B cell (primary cell): ENCODE measurements at regions of chr12 and their contacts with region 1.

Region 1: DNA sequence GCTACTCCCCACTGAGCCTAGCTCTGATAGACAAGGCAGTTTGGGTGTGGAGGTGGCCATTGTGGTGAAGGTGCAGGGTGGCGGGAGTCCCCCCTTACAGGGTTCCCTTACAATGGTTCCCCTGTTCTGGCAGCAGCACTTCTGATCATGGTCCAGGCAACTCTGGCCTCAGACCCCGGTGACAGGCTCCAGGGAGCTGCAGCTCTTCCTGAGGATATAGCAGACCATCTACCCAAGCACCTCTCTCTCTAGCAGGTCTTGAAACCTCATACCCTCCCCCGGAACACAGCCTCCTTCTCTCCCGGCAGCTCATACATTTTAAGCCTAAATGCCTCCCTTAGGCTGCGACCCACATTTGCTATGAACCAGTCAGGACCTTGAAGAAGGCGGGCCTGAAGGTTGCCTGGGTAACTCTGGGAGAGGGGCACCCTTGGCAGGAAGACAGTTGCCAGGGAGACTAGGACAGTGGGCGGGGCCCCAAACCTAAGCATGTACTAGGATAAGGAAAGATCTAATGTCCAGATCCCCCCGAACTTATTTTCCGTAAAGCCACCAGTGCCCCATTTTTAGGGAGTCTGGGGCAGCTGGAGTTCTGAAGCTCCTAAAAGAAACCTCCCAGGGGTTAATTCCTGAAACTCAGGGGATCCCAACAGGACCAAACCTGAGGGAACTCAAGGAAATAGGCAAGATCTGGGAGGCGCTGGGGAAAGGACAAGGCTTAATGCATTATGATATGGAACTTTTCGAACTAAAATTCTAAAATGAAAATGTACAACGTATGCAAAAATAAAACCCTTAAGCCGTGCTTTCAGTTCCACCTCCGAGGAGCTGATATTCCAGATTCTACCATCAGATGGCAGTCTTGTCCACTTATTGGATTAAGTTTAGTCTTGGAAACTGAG is 4.5 kb upstream of the GDF11 start:
- DNase-seq: peak; percentile 89
- ATAC-seq: peak; percentile 81
- H3K4me3 ChIP-seq: peak overlapping the region; percentile 61 to 97 (median 89)
- H3K4me3 Mint-ChIP-seq: peak overlapping the region; percentile 89
- H3K27ac ChIP-seq: peak overlapping the region; percentile 70 to 84
- H3K27ac Mint-ChIP-seq: peak overlapping the region; percentile 91
- H3K4me1 ChIP-seq: peaks cover 15 to 20% of the 10 kb centered on the region in 2 donors
- H3K4me1 Mint-ChIP-seq: peaks cover 21% of the 10 kb centered on the region
- H3K27me3 ChIP-seq: no peaks in the 10 kb centered on the region
- H3K27me3 Mint-ChIP-seq: no peaks in the 10 kb centered on the region
- CTCF ChIP-seq: peak; percentile 91

Region 2: GRCh38 chr12:55446326-55446725 is 292.0 kb before region 1 on chr12:
- CTCF ChIA-PET with region 1: no interaction called
- POLR2A ChIA-PET with region 1: no interaction called
- intact Hi-C with region 1: no loop called
- DNase-seq: no peak
- ATAC-seq: no peak
- H3K4me3 ChIP-seq: no peak overlapping the region
- H3K4me3 Mint-ChIP-seq: no peak overlapping the region
- H3K27ac ChIP-seq: no peak overlapping the region
- H3K27ac Mint-ChIP-seq: no peak overlapping the region
- H3K4me1 ChIP-seq: peaks cover 0 to 3% of the 10 kb centered on the region in 2 donors
- H3K4me1 Mint-ChIP-seq: peaks cover 8% of the 10 kb centered on the region
- H3K27me3 ChIP-seq: no peaks in the 10 kb centered on the region
- H3K27me3 Mint-ChIP-seq: no peaks in the 10 kb centered on the region
- CTCF ChIP-seq: no peak

Region 3: DNA sequence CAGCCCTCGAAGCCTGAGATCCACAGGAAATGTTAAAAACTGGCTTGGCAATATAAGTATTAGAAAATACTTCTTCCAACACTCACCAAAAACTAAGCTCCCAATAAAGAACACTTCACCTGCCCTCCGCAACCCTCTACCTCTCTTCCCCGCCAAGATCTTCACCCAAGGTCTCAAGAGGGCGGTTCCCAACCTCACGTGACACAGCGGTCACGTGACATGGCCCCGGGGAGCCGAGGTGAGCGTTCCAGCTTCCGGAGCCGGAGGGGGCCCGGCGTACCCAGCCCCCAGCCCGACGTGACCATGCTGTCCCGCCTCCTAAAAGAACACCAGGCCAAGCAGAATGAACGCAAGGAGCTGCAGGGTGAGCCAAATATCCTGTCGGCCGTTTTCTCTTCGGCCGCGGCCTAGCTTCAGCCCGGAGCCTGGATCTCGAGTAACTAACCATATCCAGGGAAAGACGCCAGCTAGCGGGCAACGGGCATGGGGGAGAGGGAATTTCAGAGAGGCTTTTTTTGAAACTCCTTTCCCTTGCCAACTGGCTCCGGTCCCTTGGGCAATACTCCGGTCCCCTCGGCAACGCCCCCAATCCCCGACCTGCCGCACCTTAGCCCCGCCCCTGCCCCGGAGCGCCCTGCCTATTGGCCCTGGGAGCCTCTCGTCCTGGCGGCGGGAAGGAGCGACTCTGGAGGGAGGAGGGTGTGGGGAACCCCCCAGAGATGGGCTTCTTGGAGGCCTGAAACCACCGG is 22.4 kb before region 1 on chr12 and contains the start of gene BLOC1S1:
- CTCF ChIA-PET with region 1: interaction called, 147 read pairs
- POLR2A ChIA-PET with region 1: interaction called, 4 read pairs
- intact Hi-C with region 1: no loop called
- DNase-seq: peak; percentile 95
- ATAC-seq: peak; percentile 95
- H3K4me3 ChIP-seq: peak within 1 kb of the TSS; percentile 86 to 98 (median 97)
- H3K4me3 Mint-ChIP-seq: peak within 1 kb of the TSS; percentile 98
- H3K27ac ChIP-seq: peak within 1 kb of the TSS; percentile 81 to 84
- H3K27ac Mint-ChIP-seq: peak within 1 kb of the TSS; percentile 99
- H3K4me1 ChIP-seq: peaks cover 16 to 30% of the 10 kb centered on the region in 2 donors
- H3K4me1 Mint-ChIP-seq: peaks cover 38% of the 10 kb centered on the region
- H3K27me3 ChIP-seq: no peaks in the 10 kb centered on the region
- H3K27me3 Mint-ChIP-seq: no peaks in the 10 kb centered on the region
- CTCF ChIP-seq: no peak
- total RNA-seq, gene BLOC1S1: 67.1 and 71.1 TPM in 2 replicates

Region 4: GRCh38 chr12:55765736-55766290 is 27.4 kb after region 1 on chr12:
- CTCF ChIA-PET with region 1: no interaction called
- POLR2A ChIA-PET with region 1: no interaction called
- intact Hi-C with region 1: no loop called
- DNase-seq: no peak
- ATAC-seq: no peak
- H3K4me3 ChIP-seq: no peak overlapping the region
- H3K4me3 Mint-ChIP-seq: no peak overlapping the region
- H3K27ac ChIP-seq: no peak overlapping the region
- H3K27ac Mint-ChIP-seq: peak overlapping the region; percentile 5
- H3K4me1 ChIP-seq: no peaks in the 10 kb centered on the region
- H3K4me1 Mint-ChIP-seq: no peaks in the 10 kb centered on the region
- H3K27me3 ChIP-seq: no peaks in the 10 kb centered on the region
- H3K27me3 Mint-ChIP-seq: no peaks in the 10 kb centered on the region
- CTCF ChIP-seq: no peak

Region 5: GRCh38 chr12:55797068-55797467 is 58.7 kb after region 1 on chr12:
- CTCF ChIA-PET with region 1: interaction called, 26 read pairs
- POLR2A ChIA-PET with region 1: interaction called, 3 read pairs
- intact Hi-C with region 1: loop called (anchors 1 kb)
- DNase-seq: peak; percentile 34
- ATAC-seq: no peak
- H3K4me3 ChIP-seq: no peak overlapping the region
- H3K4me3 Mint-ChIP-seq: no peak overlapping the region
- H3K27ac ChIP-seq: no peak overlapping the region
- H3K27ac Mint-ChIP-seq: no peak overlapping the region
- H3K4me1 ChIP-seq: no peaks in the 10 kb centered on the region
- H3K4me1 Mint-ChIP-seq: no peaks in the 10 kb centered on the region
- H3K27me3 ChIP-seq: no peaks in the 10 kb centered on the region
- H3K27me3 Mint-ChIP-seq: no peaks in the 10 kb centered on the region
- CTCF ChIP-seq: peak; percentile 44

Region 6: GRCh38 chr12:55829967-55830600 is 91.7 kb after region 1 on chr12:
- CTCF ChIA-PET with region 1: interaction called, 7 read pairs
- POLR2A ChIA-PET with region 1: no interaction called
- intact Hi-C with region 1: loop called (anchors 1 kb)
- DNase-seq: peak; percentile 65
- ATAC-seq: peak; percentile 4
- H3K4me3 ChIP-seq: peak overlapping the region; percentile 68 to 96 (median 84)
- H3K4me3 Mint-ChIP-seq: peak overlapping the region; percentile 99
- H3K27ac ChIP-seq: peak overlapping the region; percentile 57 to 60
- H3K27ac Mint-ChIP-seq: peak overlapping the region; percentile 97
- H3K4me1 ChIP-seq: peaks cover 36 to 49% of the 10 kb centered on the region in 2 donors
- H3K4me1 Mint-ChIP-seq: peaks cover 48% of the 10 kb centered on the region
- H3K27me3 ChIP-seq: no peaks in the 10 kb centered on the region
- H3K27me3 Mint-ChIP-seq: no peaks in the 10 kb centered on the region
- CTCF ChIP-seq: no peak

Region 7: GRCh38 chr12:55931780-55932550 is 193.6 kb after region 1 on chr12:
- CTCF ChIA-PET with region 1: interaction called, 112 read pairs
- POLR2A ChIA-PET with region 1: interaction called, 3 read pairs
- intact Hi-C with region 1: loop called (anchors 1 kb)
- DNase-seq: peak; percentile 45
- ATAC-seq: no peak
- H3K4me3 ChIP-seq: peak overlapping the region; percentile 84 to 94 (median 93)
- H3K4me3 Mint-ChIP-seq: peak overlapping the region; percentile 94
- H3K27ac ChIP-seq: peak overlapping the region; percentile 83 to 92
- H3K27ac Mint-ChIP-seq: peak overlapping the region; percentile 95
- H3K4me1 ChIP-seq: peaks cover 45 to 59% of the 10 kb centered on the region in 2 donors
- H3K4me1 Mint-ChIP-seq: peaks cover 63% of the 10 kb centered on the region
- H3K27me3 ChIP-seq: no peaks in the 10 kb centered on the region
- H3K27me3 Mint-ChIP-seq: no peaks in the 10 kb centered on the region
- CTCF ChIP-seq: no peak

Region 8: DNA sequence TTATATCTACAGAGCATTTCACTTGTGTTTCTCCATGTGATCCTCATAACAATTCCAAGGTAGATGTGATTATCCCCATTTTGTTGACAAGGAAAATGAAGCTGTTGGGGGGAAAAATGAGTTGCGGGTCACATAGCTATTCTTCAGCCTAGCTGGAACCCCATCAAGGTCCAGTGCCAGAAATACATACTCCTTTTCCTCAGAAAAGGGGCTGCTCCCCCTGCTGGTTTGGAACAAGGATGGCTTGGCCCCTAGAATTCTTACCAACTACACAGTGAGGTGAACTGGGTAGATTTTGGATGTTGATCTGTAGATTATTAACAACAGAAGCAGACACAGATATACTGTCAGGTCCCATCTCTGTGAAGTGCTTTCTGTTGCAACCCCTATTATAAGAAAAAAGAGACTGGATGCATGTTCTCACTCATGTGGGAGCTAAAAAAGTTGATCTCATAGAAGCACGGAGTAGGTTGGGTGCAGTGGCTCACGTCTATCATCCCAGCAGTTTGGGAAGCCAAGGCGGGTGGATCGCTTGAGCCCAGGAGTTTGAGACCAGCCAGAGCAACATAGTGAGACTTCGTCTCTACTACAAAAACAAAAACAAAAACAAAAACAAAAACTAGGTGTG is 291.4 kb after region 1 on chr12:
- CTCF ChIA-PET with region 1: interaction called, 43 read pairs
- POLR2A ChIA-PET with region 1: no interaction called
- intact Hi-C with region 1: loop called (anchors 1 kb)
- DNase-seq: peak; percentile 56
- ATAC-seq: peak; percentile 51
- H3K4me3 ChIP-seq: no peak overlapping the region
- H3K4me3 Mint-ChIP-seq: no peak overlapping the region
- H3K27ac ChIP-seq: no peak overlapping the region
- H3K27ac Mint-ChIP-seq: no peak overlapping the region
- H3K4me1 ChIP-seq: no peaks in the 10 kb centered on the region
- H3K4me1 Mint-ChIP-seq: no peaks in the 10 kb centered on the region
- H3K27me3 ChIP-seq: no peaks in the 10 kb centered on the region
- H3K27me3 Mint-ChIP-seq: no peaks in the 10 kb centered on the region
- CTCF ChIP-seq: peak; percentile 71

Region 9: GRCh38 chr12:56224102-56224701 is 485.8 kb after region 1 on chr12 and contains the start of gene NABP2:
- CTCF ChIA-PET with region 1: interaction called, 6 read pairs
- POLR2A ChIA-PET with region 1: no interaction called
- intact Hi-C with region 1: loop called (anchors 1 kb)
- DNase-seq: peak; percentile 94
- ATAC-seq: peak; percentile 72
- H3K4me3 ChIP-seq: peak within 1 kb of the TSS; percentile 41 to 71 (median 62)
- H3K4me3 Mint-ChIP-seq: peak within 1 kb of the TSS; percentile 100
- H3K27ac ChIP-seq: peak within 1 kb of the TSS; percentile 53 to 79
- H3K27ac Mint-ChIP-seq: peak within 1 kb of the TSS; percentile 87
- H3K4me1 ChIP-seq: peaks cover 26 to 48% of the 10 kb centered on the region in 2 donors
- H3K4me1 Mint-ChIP-seq: peaks cover 47% of the 10 kb centered on the region
- H3K27me3 ChIP-seq: no peaks in the 10 kb centered on the region
- H3K27me3 Mint-ChIP-seq: no peaks in the 10 kb centered on the region
- CTCF ChIP-seq: peak; percentile 93
- total RNA-seq, gene NABP2: 12.4 and 14.9 TPM in 2 replicates

Region 10: DNA sequence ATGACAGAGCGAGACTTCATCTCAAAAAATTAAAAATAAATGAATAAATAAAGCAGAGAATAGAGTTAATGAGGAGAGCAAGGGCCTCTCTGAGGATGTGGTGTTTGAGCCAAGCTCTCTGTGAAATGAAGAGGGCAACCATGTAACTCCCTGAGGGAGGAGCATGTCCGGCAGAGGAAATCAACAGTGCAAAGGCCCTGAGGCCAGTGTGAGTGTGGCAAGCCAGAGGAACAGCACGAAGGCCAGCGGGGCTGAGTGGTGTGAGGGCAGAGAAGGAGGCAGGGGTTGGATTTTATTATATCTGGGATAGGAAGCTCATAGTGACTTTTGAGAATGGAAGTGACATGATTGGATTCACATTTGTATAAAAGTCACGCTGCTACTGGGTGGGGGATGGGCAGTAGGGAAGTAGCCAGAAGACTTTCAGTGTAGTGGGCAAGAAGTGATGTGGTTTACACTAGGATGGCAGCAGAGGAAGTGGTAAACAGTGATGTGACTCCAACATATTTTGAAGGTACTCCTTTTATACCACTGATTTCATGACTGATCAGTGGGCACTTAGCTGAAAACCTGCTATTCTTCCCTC is 1419.3 kb after region 1 on chr12:
- CTCF ChIA-PET with region 1: no interaction called
- POLR2A ChIA-PET with region 1: no interaction called
- intact Hi-C with region 1: no loop called
- DNase-seq: no peak
- ATAC-seq: no peak
- H3K4me3 ChIP-seq: no peak overlapping the region
- H3K4me3 Mint-ChIP-seq: no peak overlapping the region
- H3K27ac ChIP-seq: no peak overlapping the region
- H3K27ac Mint-ChIP-seq: no peak overlapping the region
- H3K4me1 ChIP-seq: peaks cover 4 to 14% of the 10 kb centered on the region in 2 donors
- H3K4me1 Mint-ChIP-seq: peaks cover 9% of the 10 kb centered on the region
- H3K27me3 ChIP-seq: no peaks in the 10 kb centered on the region
- H3K27me3 Mint-ChIP-seq: peaks cover 9% of the 10 kb centered on the region
- CTCF ChIP-seq: no peak